ENCODE measurements at regions of chr16 and their contacts with region 1.

Region 1: GRCh38 chr16:27286451-27286850 is 17.9 kb upstream of the NSMCE1 start:
- DNase-seq: peak; percentile 98
- H3K4me3 ChIP-seq: no peak overlapping the region
- H3K27ac ChIP-seq: peak overlapping the region; percentile 86
- H3K4me1 ChIP-seq: peaks cover 15% of the 10 kb centered on the region
- H3K27me3 ChIP-seq: no peaks in the 10 kb centered on the region
- CTCF ChIP-seq: no peak
- POLR2A ChIP-seq: peak; percentile 50

Region 2: GRCh38 chr16:27242868-27243590 is 43.4 kb before region 1 on chr16:
- CTCF ChIA-PET with region 1: interaction called, 3 read pairs
- POLR2A ChIA-PET with region 1: interaction called, 3 read pairs
- dilution Hi-C with region 1: no loop called
- intact Hi-C with region 1: loop called (anchors 1 kb)
- DNase-seq: peak; percentile 96
- H3K4me3 ChIP-seq: peak overlapping the region in 1 of 3 experiments; percentile 1
- H3K27ac ChIP-seq: peak overlapping the region; percentile 96
- H3K4me1 ChIP-seq: peaks cover 62% of the 10 kb centered on the region
- H3K27me3 ChIP-seq: no peaks in the 10 kb centered on the region
- CTCF ChIP-seq: peak in 1 of 2 donors; percentile 11
- POLR2A ChIP-seq: peak; percentile 52

Region 3: GRCh38 chr16:27253526-27253930 is 32.9 kb before region 1 on chr16:
- CTCF ChIA-PET with region 1: no interaction called
- POLR2A ChIA-PET with region 1: no interaction called
- dilution Hi-C with region 1: no loop called
- intact Hi-C with region 1: loop called (anchors 1 kb)
- DNase-seq: peak; percentile 83
- H3K4me3 ChIP-seq: no peak overlapping the region
- H3K27ac ChIP-seq: peak overlapping the region; percentile 48
- H3K4me1 ChIP-seq: peaks cover 48% of the 10 kb centered on the region
- H3K27me3 ChIP-seq: no peaks in the 10 kb centered on the region
- CTCF ChIP-seq: no peak
- POLR2A ChIP-seq: no peak

Region 4: GRCh38 chr16:27268376-27269299 is 17.8 kb before region 1 on chr16 and contains the start of gene NSMCE1:
- CTCF ChIA-PET with region 1: no interaction called
- POLR2A ChIA-PET with region 1: no interaction called
- dilution Hi-C with region 1: no loop called
- intact Hi-C with region 1: loop called (anchors 2 kb)
- DNase-seq: peak; percentile 92
- H3K4me3 ChIP-seq: peak within 1 kb of the TSS; percentile 61 to 78 (median 77)
- H3K27ac ChIP-seq: peak within 1 kb of the TSS; percentile 58
- H3K4me1 ChIP-seq: peaks cover 16% of the 10 kb centered on the region
- H3K27me3 ChIP-seq: no peaks in the 10 kb centered on the region
- CTCF ChIP-seq: peak in 1 of 2 donors; percentile 23
- POLR2A ChIP-seq: peak; percentile 86
- total RNA-seq, gene NSMCE1: 42.0 and 46.4 TPM in 2 replicates

Region 5: DNA sequence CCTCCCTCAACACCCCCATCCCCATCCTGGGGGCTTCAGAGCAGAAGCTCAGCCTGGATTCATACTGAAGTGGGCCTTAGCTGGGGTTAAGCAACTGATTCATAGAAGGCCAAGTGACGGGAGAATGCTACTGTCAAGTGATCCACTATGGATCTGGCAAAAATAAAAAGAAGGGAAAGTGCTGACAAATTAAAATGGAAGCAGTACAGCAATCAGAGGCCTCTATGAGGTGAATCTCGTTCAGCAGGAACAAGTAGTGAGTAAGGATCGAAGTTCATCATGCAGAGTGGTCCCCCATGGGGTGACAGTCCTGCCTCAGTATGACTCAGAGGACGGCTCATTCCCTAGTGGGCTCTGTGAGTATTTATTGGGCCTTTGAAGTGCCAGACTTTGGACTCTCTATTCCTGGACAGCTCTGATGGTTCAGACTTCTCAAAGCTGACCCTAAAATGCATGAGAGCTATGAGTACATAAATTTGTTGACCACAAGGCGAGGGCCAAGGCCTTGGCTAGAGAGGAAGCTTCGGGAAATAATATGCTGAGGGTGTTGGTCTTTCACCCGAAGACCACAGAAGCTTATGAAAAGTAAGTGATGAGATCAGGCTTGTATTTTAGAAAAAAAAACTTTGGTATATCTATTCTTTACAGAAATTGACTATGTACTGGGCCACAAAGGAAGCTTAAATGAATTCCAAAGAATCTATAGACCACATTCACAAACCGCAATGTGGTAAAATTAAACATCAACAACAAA is 12.6 kb before region 1 on chr16:
- CTCF ChIA-PET with region 1: interaction called, 3 read pairs
- POLR2A ChIA-PET with region 1: no interaction called
- dilution Hi-C with region 1: no loop called
- intact Hi-C with region 1: loop called (anchors 1 kb)
- DNase-seq: no peak
- H3K4me3 ChIP-seq: no peak overlapping the region
- H3K27ac ChIP-seq: no peak overlapping the region
- H3K4me1 ChIP-seq: peaks cover 5% of the 10 kb centered on the region
- H3K27me3 ChIP-seq: no peaks in the 10 kb centered on the region
- CTCF ChIP-seq: no peak
- POLR2A ChIP-seq: no peak

Region 6: GRCh38 chr16:27313422-27314160 is 27.1 kb after region 1 on chr16 and contains the start of gene IL4R:
- CTCF ChIA-PET with region 1: interaction called, 3 read pairs
- POLR2A ChIA-PET with region 1: no interaction called
- dilution Hi-C with region 1: no loop called
- intact Hi-C with region 1: loop called (anchors 1 kb)
- DNase-seq: peak; percentile 59
- H3K4me3 ChIP-seq: peak within 1 kb of the TSS; percentile 78 to 95 (median 86)
- H3K27ac ChIP-seq: peak within 1 kb of the TSS; percentile 99
- H3K4me1 ChIP-seq: peaks cover 46% of the 10 kb centered on the region
- H3K27me3 ChIP-seq: no peaks in the 10 kb centered on the region
- CTCF ChIP-seq: no peak
- POLR2A ChIP-seq: no peak
- total RNA-seq, gene IL4R: 139 and 150 TPM in 2 replicates

Region 7: GRCh38 chr16:27326738-27327585 is 40.5 kb after region 1 on chr16:
- CTCF ChIA-PET with region 1: no interaction called
- POLR2A ChIA-PET with region 1: no interaction called
- dilution Hi-C with region 1: no loop called
- intact Hi-C with region 1: loop called (anchors 2 kb)
- DNase-seq: peak; percentile 78
- H3K4me3 ChIP-seq: no peak overlapping the region
- H3K27ac ChIP-seq: peak overlapping the region; percentile 91
- H3K4me1 ChIP-seq: peaks cover 37% of the 10 kb centered on the region
- H3K27me3 ChIP-seq: no peaks in the 10 kb centered on the region
- CTCF ChIP-seq: peak in 1 of 2 donors; percentile 3
- POLR2A ChIP-seq: peak; percentile 34